Stomach (tissue), 19 donors: ENCODE measurements at regions of chr6 and their contacts with region 1.

Region 1: DNA sequence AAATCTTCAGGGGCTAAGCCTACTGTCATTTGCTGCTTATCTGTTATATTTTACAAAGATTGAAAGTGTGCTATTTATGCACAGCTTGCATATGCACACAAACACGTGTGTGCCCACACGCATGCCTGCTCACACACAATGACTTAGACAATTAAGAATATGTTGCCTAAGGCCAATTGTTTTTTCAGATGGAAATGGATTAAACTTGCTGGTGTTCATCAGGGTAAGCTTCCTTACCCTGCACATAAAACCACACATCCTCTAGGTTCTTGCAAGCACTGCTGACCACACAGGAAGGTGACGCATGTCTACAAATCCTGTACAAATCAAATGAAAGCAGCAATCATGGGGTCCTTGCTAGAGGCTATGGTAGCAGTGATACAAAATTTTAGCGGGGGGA is 58.4 kb downstream of the GJA10 start:
- DNase-seq: peak in 1 of 2 donors; percentile 60
- H3K4me3 ChIP-seq: no peak overlapping the region
- H3K27ac ChIP-seq: no peak overlapping the region
- H3K4me1 ChIP-seq: peaks cover 0 to 7% (median 0%) of the 10 kb centered on the region in 4 donors
- H3K27me3 ChIP-seq: no peaks in the 10 kb centered on the region
- CTCF ChIP-seq: no peak
- EP300 ChIP-seq: no peak
- POLR2A ChIP-seq: no peak

Region 2: DNA sequence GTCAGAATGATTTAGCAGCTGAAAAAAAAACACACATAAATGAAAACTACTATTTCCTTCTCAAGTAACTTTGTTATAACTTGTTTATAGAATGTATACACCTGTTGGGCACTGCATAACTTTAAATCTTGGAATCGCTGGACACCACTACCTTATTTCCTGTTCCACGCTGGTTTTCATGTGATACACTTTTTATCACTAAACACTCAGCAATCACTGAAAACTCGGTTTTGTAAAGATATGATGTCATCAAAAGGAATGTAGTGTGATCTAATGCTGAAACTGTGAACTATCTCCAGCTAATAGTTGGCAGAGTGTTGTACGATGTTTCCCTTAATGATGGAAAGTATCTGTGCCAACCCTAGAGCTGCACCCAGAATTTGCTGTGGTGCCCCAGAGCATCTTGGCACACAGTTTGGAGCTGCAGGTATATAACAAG is 216.0 kb after region 1 on chr6:
- intact Hi-C with region 1: no loop called
- DNase-seq: peak in 1 of 2 donors; percentile 56
- H3K4me3 ChIP-seq: no peak overlapping the region
- H3K27ac ChIP-seq: no peak overlapping the region
- H3K4me1 ChIP-seq: peaks cover 0 to 11% (median 0%) of the 10 kb centered on the region in 4 donors
- H3K27me3 ChIP-seq: no peaks in the 10 kb centered on the region
- CTCF ChIP-seq: no peak
- EP300 ChIP-seq: no peak
- POLR2A ChIP-seq: no peak

Region 3: DNA sequence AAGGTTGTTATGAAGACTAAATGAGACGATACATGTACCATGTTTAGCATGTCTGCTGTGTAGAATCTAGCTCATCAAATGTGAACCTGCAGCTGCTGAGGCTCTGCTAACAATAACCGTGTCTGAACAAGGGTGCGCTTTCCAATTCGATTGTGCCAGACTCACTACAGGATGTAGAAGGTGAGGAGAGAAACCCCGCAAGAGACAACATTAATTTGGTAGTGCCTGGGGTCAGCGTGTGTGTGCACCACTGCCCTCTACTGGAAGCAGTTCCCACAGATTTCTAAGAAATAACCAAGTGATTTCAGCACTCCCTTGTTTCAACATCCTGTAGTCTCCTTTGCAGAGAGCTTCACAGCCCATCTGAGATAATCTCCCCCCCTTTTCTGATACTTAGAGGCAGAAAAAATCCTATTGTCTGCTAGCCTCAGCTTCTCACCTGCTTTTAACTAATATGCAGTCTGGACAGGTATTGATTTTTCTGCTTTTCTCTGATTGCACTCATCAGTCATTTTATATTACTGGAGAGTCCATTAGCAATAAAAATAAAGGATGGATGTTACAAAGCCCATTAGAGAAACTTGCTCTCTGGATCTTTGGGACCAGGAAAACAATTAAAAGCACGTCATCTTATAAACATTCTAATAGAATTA is 440.7 kb after region 1 on chr6:
- intact Hi-C with region 1: loop called (anchors 10 kb)
- DNase-seq: peak; percentile 53 to 86
- H3K4me3 ChIP-seq: no peak overlapping the region
- H3K27ac ChIP-seq: no peak overlapping the region
- H3K4me1 ChIP-seq: no peaks in the 10 kb centered on the region
- H3K27me3 ChIP-seq: peaks cover 0 to 3% (median 0%) of the 10 kb centered on the region in 3 donors
- CTCF ChIP-seq: peak in 5 of 7 experiments; percentile 24 to 74 (median 60)
- EP300 ChIP-seq: no peak
- POLR2A ChIP-seq: no peak

Region 4: GRCh38 chr6:90483116-90483839 is 530.6 kb after region 1 on chr6:
- intact Hi-C with region 1: no loop called
- DNase-seq: no peak
- H3K4me3 ChIP-seq: no peak overlapping the region
- H3K27ac ChIP-seq: no peak overlapping the region
- H3K4me1 ChIP-seq: peaks cover 4 to 8% (median 6%) of the 10 kb centered on the region in 4 donors
- H3K27me3 ChIP-seq: no peaks in the 10 kb centered on the region
- CTCF ChIP-seq: no peak
- EP300 ChIP-seq: no peak
- POLR2A ChIP-seq: no peak